Vagina (tissue), 2 donors: ENCODE measurements at regions of chr7 and their contacts with region 1.

Region 1: GRCh38 chr7:19117091-19117869 is at the start of gene TWIST1:
- DNase-seq: peak in 1 of 2 donors; percentile 90
- H3K4me3 ChIP-seq: peak within 1 kb of the TSS; percentile 63 to 67
- H3K27ac ChIP-seq: peak within 1 kb of the TSS; percentile 82
- H3K4me1 ChIP-seq: peaks cover 25% of the 10 kb centered on the region
- H3K27me3 ChIP-seq: peaks cover 8% of the 10 kb centered on the region
- CTCF ChIP-seq: no peak
- POLR2A ChIP-seq: peak in 1 of 2 donors; percentile 22
- total RNA-seq, gene TWIST1: 11.5 TPM

Region 2: DNA sequence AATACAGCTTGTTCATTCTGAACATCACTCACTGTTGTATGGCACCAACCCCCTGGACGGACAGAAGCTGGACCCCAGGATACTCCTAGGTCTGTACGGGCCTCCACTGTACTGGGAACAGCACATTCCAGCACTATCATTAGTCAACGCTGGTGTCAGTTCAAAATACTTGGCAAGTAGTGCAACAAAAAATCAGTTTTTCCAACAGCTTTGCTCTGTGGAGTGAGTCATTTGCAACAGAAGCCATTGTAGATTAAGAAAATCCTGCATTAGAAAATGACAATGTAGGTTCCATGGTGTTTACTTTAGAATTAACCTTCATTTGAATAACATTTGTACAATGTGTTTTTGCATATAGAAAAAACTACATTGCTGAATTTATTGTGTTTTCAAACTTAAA is 355.1 kb before region 1 on chr7:
- intact Hi-C with region 1: loop called (anchors 5 kb)
- DNase-seq: no peak
- H3K4me3 ChIP-seq: no peak overlapping the region
- H3K27ac ChIP-seq: no peak overlapping the region
- H3K4me1 ChIP-seq: no peaks in the 10 kb centered on the region
- H3K27me3 ChIP-seq: no peaks in the 10 kb centered on the region
- CTCF ChIP-seq: no peak
- POLR2A ChIP-seq: no peak